Right cardiac atrium (tissue), 5 donors: ENCODE measurements at regions of chr9 and their contacts with region 1.

Region 1: DNA sequence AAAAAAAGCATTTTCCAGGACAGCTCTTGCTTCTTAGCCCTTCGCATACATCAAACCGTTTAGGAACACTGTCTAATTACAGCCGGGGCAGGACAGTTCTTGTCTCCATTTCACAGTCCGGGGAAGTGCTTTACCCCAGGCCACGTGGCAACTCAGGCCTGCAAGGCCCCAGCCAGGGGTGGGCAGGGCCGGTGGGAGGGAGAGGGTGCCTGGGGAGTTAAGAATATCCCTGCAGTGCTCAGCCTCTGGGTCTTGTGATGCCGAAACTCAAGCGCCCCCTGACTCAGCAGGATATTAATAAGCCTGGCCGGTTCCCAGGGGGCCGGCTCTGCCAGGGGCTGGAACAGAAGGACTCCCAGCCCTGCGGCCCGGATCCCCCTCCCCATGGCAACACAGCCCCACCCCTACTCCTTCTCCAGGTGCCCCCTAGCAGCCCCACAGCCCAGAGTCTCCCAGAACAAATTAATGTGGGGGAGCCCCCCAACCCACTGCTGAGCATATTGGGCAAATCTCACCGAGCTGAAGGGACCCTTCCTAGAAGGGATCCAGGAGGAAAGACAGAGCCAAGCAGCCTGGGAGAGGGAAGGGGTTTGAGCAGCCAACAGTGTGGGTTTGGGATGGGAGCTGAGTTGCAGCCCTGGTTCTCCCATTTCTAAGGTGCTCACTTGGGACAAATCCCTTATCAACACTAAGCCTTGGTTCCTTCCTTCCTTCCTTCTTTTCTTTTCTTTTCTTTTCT is 45.3 kb downstream of the PLPP7 start:
- DNase-seq: peak; percentile 71 to 91 (median 86)
- ATAC-seq: peak; percentile 79 to 84
- H3K4me3 ChIP-seq: no peak overlapping the region
- H3K27ac ChIP-seq: peak overlapping the region; percentile 68
- H3K4me1 ChIP-seq: peaks cover 2% of the 10 kb centered on the region
- H3K27me3 ChIP-seq: no peaks in the 10 kb centered on the region

Region 2: DNA sequence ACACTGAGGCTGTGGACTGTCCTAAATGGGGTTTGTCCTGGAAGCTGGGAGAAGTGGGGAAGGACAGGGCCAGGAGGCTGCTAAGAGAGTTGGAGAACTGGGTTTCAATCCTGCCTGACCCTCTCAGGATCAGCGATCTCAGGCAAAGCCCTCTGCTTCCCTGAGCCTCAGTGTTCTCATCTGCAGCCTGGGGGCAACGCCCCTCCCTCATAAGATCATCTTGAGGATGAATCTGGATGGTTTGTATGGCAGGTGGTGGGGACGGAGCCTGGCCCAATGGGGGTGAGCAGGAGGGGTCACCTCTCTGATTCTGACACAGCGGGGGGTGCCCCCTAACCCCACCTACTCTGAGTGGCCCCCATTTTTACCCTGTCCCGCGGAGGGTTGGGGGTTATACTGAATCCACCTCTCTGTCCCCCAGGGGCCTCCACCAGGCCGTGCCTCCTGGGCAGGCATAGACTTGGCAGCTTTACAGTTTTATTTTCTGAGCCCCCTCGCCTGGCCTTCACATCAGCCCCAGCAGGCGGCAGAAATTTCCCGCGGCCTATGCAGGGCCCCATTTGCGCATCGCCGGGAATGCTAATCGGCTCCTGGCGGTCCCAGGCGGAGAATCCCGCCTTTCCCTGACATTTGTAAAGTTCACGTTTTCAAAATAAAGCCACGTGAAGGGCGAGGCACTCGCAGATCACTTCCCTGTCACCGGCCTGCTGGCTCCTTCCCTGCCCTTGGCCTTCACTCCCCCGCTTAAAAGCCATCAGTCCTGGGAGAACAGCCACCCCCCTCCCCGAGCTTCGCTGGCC is 343.6 kb before region 1 on chr9:
- intact Hi-C with region 1: no loop called
- DNase-seq: no peak
- ATAC-seq: no peak
- H3K4me3 ChIP-seq: no peak overlapping the region
- H3K27ac ChIP-seq: no peak overlapping the region
- H3K4me1 ChIP-seq: no peaks in the 10 kb centered on the region
- H3K27me3 ChIP-seq: no peaks in the 10 kb centered on the region

Region 3: GRCh38 chr9:131053896-131054295 is 280.9 kb before region 1 on chr9:
- intact Hi-C with region 1: loop called in 2 of 4 experiments (anchors 2 to 5 kb)
- DNase-seq: no peak
- ATAC-seq: no peak
- H3K4me3 ChIP-seq: no peak overlapping the region
- H3K27ac ChIP-seq: no peak overlapping the region
- H3K4me1 ChIP-seq: no peaks in the 10 kb centered on the region
- H3K27me3 ChIP-seq: no peaks in the 10 kb centered on the region

Region 4: DNA sequence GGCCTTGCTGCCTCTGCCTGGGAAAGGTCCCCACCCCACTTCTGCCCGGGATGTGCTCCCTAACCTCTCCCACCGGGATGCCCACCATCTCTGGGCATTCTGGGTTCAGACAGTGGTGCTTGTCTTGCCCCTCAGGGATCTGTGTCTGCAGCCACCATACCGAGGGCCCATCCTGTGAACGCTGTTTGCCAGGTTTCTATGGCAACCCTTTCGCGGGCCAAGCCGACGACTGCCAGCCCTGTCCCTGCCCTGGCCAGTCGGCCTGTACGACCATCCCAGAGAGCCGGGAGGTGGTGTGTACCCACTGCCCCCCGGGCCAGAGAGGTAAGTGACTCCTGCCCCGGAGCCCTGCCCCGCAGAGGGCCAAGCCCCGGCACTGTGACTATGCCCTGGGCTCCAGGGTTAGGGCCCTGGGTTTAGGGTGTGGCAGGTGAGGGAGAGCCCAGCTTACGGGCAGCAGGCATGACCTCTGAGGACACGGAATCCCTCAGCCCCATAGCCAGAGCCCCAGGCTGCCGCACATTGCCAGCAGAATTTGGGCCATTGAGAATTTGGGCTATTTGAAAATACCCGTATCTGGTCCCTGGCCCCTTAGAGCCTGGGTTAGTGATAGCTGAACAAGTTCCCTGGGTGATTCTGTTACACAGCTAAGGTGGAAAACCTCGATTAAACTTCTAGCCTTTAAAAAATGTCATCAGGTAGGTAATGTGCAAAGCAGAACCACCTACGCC is 273.7 kb before region 1 on chr9:
- intact Hi-C with region 1: loop called in 3 of 4 experiments (anchors 2 to 5 kb)
- DNase-seq: no peak
- ATAC-seq: no peak
- H3K4me3 ChIP-seq: no peak overlapping the region
- H3K27ac ChIP-seq: no peak overlapping the region
- H3K4me1 ChIP-seq: no peaks in the 10 kb centered on the region
- H3K27me3 ChIP-seq: no peaks in the 10 kb centered on the region

Region 5: GRCh38 chr9:131178382-131178781 is 156.4 kb before region 1 on chr9:
- intact Hi-C with region 1: loop called in 3 of 4 experiments (anchors 1 to 5 kb)
- DNase-seq: peak; percentile 69 to 89 (median 85)
- ATAC-seq: peak; percentile 93
- H3K4me3 ChIP-seq: no peak overlapping the region
- H3K27ac ChIP-seq: no peak overlapping the region
- H3K4me1 ChIP-seq: peaks cover 4% of the 10 kb centered on the region
- H3K27me3 ChIP-seq: no peaks in the 10 kb centered on the region

Region 6: GRCh38 chr9:131237931-131238401 is 96.8 kb before region 1 on chr9:
- intact Hi-C with region 1: loop called in 1 of 4 experiments (anchors 10 kb)
- DNase-seq: peak; percentile 74 to 89 (median 88)
- ATAC-seq: peak; percentile 47 to 59
- H3K4me3 ChIP-seq: no peak overlapping the region
- H3K27ac ChIP-seq: peak overlapping the region; percentile 81
- H3K4me1 ChIP-seq: peaks cover 13% of the 10 kb centered on the region
- H3K27me3 ChIP-seq: no peaks in the 10 kb centered on the region

Region 7: DNA sequence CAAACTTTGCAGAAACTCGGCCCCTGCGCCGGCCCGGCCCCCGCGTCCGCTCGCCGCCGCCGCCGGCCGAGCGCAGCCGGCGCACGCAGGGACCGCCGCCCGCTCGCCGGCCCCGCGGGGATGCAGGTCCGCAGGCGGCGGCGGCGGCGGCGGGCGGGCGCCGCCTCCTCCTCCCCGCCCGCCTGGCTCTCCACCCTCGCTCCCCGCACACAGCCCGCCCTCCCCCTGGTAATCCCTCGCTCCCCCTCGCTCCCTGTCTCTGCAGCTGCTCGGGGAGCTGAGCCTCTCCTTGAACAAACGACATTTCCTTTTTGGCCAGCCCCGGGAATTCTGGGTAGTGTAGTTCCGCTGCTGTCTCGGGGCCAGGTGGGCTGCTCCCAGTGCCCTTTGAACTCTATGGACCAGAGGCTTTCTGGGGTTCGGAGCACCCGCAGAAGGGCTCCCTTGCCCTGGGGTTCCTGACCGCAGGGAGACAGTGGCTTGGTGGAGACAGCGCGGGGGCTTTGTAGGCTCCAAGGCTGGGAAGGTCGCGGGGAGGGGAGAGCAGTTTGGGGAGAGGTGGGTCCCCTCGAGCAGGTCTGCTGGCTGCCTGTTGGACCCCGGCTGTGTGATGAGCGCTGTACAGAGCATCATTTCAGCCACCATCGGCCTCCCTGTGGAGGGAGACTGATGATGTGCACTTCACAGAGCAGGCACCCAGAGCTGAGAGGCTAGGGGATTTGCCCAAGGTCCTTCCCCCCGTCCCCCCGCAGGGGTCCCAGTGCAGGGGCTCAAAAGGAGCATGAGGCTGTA is 56.7 kb before region 1 on chr9:
- intact Hi-C with region 1: loop called in 3 of 4 experiments (anchors 5 to 10 kb)
- DNase-seq: peak; percentile 87 to 93 (median 93)
- ATAC-seq: peak; percentile 64 to 69
- H3K4me3 ChIP-seq: peak overlapping the region; percentile 86
- H3K27ac ChIP-seq: peak overlapping the region; percentile 83
- H3K4me1 ChIP-seq: no peaks in the 10 kb centered on the region
- H3K27me3 ChIP-seq: no peaks in the 10 kb centered on the region

Region 8: DNA sequence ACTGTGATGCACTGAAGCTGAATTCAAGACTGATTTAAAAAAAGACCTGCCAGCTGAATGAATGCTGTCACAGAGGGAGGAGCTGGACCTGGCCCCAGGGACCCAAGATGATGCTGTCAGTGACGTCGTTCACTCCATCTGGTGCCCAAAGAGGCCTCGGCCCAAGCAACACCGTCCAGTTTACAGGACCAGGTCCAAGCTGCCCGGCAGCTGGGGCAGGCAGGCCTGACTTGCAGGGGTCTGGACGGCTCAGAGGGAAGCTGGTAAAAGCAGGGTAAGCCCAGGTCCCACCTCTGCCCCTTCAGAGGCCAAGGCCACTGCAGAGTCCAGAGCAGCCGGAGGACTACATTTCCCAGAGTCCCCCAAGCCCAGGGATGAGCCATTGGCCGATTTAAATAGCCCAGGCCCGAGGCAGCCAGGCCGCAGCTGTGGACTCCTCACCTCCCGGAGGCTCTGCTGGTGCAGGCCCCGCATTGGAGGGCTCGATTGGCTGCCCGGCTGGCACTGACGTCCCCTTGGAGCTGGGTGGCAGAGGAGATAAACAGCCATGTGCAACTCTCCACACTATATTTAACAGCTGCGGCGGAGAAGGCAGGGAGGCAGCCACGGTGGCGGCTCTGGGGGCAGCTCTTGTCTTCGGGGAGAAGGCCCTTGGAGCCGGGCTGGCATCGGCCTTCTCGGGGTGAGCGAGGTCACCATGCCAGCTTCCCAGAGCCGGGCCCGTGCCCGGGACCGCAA is 45.3 kb before region 1 on chr9 and contains the start of gene PLPP7:
- intact Hi-C with region 1: loop called in 1 of 4 experiments (anchors 10 kb)
- DNase-seq: peak; percentile 86 to 94 (median 94)
- ATAC-seq: peak; percentile 90 to 94
- H3K4me3 ChIP-seq: peak within 1 kb of the TSS; percentile 47
- H3K27ac ChIP-seq: peak within 1 kb of the TSS; percentile 80
- H3K4me1 ChIP-seq: peaks cover 2% of the 10 kb centered on the region
- H3K27me3 ChIP-seq: no peaks in the 10 kb centered on the region
- total RNA-seq, gene PLPP7: 96.3 to 126 (median 106) TPM

Region 9: GRCh38 chr9:131423171-131423581 is 88.4 kb after region 1 on chr9:
- intact Hi-C with region 1: no loop called
- DNase-seq: peak; percentile 53 to 86 (median 75)
- ATAC-seq: peak; percentile 73 to 76
- H3K4me3 ChIP-seq: no peak overlapping the region
- H3K27ac ChIP-seq: peak overlapping the region; percentile 38
- H3K4me1 ChIP-seq: peaks cover 23% of the 10 kb centered on the region
- H3K27me3 ChIP-seq: no peaks in the 10 kb centered on the region